ENCODE measurements at regions of chrX and their contacts with region 1.

Region 1: GRCh38 chrX:17987783-17988182 is 126.7 kb upstream of the RAI2 start:
- DNase-seq: peak in 7 of 9 donors; percentile 50 to 80 (median 68)
- ATAC-seq: peak; percentile 85
- H3K4me3 ChIP-seq: no peak overlapping the region
- H3K4me3 Mint-ChIP-seq: peak overlapping the region in 8 of 10 donors; percentile 23 to 80 (median 68)
- H3K27ac ChIP-seq: no peak overlapping the region
- H3K27ac Mint-ChIP-seq: peak overlapping the region in 7 of 9 donors; percentile 41 to 89 (median 77)
- H3K4me1 ChIP-seq: peaks cover 0 to 27% of the 10 kb centered on the region in 2 donors
- H3K4me1 Mint-ChIP-seq: peaks cover 6 to 39% (median 32%) of the 10 kb centered on the region in 7 donors
- H3K27me3 ChIP-seq: no peaks in the 10 kb centered on the region
- H3K27me3 Mint-ChIP-seq: no peaks in the 10 kb centered on the region

Region 2: DNA sequence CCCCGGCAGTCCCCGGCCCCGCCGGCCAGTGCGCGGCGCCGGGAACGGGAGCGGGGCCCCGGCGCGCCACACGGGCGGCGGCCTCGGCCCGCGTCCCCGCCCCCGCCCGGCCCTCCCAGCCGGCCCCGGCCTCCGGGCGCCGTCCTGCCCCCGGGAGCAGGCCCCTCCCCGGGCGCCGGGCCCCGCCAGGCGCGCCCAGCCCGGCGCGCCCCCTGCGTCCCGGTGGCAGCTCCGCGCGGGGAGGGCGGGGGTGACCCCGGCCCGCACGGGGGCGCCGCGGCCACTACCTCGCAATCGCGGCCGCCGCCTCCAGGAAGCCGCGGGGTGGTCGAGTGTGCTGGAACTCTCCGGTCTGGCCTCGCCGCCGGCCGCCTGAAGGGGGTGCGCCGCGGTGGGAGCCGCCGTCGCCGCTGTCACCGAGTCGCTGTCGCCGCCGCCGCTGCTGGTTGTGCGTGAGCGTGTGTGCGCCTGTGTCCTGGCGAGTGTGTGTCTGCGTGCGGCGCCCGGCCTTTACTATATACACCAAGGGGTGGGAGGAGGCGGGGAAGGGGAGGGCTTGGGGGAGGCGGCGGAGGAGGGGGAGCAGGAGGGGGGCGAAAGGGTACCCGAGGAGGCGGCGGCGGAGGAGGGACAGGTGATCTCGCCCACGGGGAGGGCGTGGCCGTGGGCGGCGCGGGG is 126.8 kb before region 1 on chrX and contains the start of gene RAI2:
- CTCF ChIA-PET with region 1: no interaction called
- POLR2A ChIA-PET with region 1: no interaction called
- intact Hi-C with region 1: loop called in 1 of 2 experiments (anchors 10 kb)
- DNase-seq: peak in 6 of 9 donors; percentile 8 to 51 (median 26)
- ATAC-seq: peak; percentile 73
- H3K4me3 ChIP-seq: peak within 1 kb of the TSS; percentile 37
- H3K4me3 Mint-ChIP-seq: peak within 1 kb of the TSS; percentile 54 to 89 (median 86)
- H3K27ac ChIP-seq: no peak within 1 kb of the TSS
- H3K27ac Mint-ChIP-seq: peak within 1 kb of the TSS in 2 of 9 donors; percentile 62 to 70
- H3K4me1 ChIP-seq: no peaks in the 10 kb centered on the region
- H3K4me1 Mint-ChIP-seq: peaks cover 0 to 11% (median 5%) of the 10 kb centered on the region in 7 donors
- H3K27me3 ChIP-seq: no peaks in the 10 kb centered on the region
- H3K27me3 Mint-ChIP-seq: peaks cover 0 to 50% (median 27%) of the 10 kb centered on the region in 5 donors
- total RNA-seq, gene RAI2: 1.6 to 2.8 (median 2.2) TPM in 4 of 5 experiments, not detected in the other

Region 3: DNA sequence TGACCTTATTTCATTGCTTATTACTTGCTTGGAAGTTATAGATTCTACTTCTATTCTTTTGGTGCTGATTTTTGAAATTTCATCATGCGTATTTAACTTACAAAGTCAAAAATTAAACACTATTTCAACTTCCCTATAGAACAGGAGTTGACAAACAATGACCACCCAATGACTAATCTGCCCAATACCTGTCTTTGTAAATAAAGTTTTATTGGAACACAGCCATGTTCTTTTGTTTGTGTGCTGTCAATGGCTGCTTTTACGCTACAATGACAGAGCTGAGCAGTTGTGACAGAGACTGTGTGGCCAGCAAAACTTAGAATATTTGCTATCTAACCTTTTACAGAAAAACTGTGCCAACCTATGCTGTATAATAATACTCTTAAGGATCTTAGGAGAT is 30.6 kb before region 1 on chrX:
- CTCF ChIA-PET with region 1: no interaction called
- POLR2A ChIA-PET with region 1: no interaction called
- intact Hi-C with region 1: no loop called
- DNase-seq: no peak
- ATAC-seq: no peak
- H3K4me3 ChIP-seq: no peak overlapping the region
- H3K4me3 Mint-ChIP-seq: no peak overlapping the region
- H3K27ac ChIP-seq: no peak overlapping the region
- H3K27ac Mint-ChIP-seq: no peak overlapping the region
- H3K4me1 ChIP-seq: no peaks in the 10 kb centered on the region
- H3K4me1 Mint-ChIP-seq: peaks cover 0 to 15% (median 12%) of the 10 kb centered on the region in 7 donors
- H3K27me3 ChIP-seq: no peaks in the 10 kb centered on the region
- H3K27me3 Mint-ChIP-seq: peaks cover 0 to 7% (median 3%) of the 10 kb centered on the region in 5 donors

Region 4: GRCh38 chrX:18425199-18426003 is 437.6 kb after region 1 on chrX and contains the start of gene CDKL5:
- CTCF ChIA-PET with region 1: no interaction called
- POLR2A ChIA-PET with region 1: no interaction called
- intact Hi-C with region 1: no loop called
- DNase-seq: peak; percentile 83 to 98 (median 96)
- ATAC-seq: peak; percentile 97
- H3K4me3 ChIP-seq: peak within 1 kb of the TSS; percentile 77
- H3K4me3 Mint-ChIP-seq: peak within 1 kb of the TSS; percentile 85 to 95 (median 89)
- H3K27ac ChIP-seq: peak within 1 kb of the TSS; percentile 93
- H3K27ac Mint-ChIP-seq: peak within 1 kb of the TSS; percentile 71 to 92 (median 91)
- H3K4me1 ChIP-seq: peaks cover 0 to 5% of the 10 kb centered on the region in 2 donors
- H3K4me1 Mint-ChIP-seq: peaks cover 5 to 25% (median 13%) of the 10 kb centered on the region in 7 donors
- H3K27me3 ChIP-seq: no peaks in the 10 kb centered on the region
- H3K27me3 Mint-ChIP-seq: peaks cover 0 to 25% (median 0%) of the 10 kb centered on the region in 5 donors
- total RNA-seq, gene CDKL5: 1.2 to 7.0 (median 5.8) TPM

Measured in naive thymus-derived CD4-positive, alpha-beta T cell (primary cell).